Caco-2 (cell line): ENCODE measurements at regions of chr2 and their contacts with region 1.

Region 1: DNA sequence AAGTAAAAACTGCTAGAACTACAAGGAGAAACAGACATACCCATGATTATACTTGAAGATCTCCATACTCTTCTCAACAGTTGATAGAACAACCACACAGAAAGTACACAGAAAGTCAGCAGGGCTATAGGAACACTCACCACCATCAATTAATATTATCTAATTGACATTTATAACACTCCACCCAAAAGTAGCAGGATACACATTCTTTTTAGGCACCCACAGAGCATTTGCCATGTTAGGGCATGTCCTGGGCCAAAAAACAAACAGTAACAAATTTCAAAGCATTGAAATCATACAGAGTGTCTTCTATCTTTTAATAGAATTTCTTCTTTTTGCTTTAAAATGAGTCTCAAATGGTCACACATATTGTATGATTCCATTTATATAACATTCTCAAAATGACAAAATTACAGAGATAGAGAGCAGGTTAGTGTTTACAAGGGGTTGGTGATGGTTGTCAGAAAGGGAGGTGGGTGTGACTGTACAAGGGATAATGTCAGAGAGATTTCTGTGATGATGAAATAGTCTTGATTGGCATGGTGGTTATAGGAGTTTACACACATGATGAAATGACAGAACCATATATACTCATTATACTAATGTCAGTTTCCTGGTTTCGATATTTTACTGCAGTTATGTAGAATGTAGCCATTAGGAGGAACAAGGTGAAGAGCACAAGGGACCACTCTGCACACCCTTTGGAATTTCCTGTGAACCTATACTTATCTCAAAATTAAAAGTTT is 82.8 kb downstream of the NCK2 start:
- DNase-seq: no peak
- H3K4me3 ChIP-seq: no peak overlapping the region
- H3K4me3 Mint-ChIP-seq: no peak overlapping the region
- H3K27ac Mint-ChIP-seq: no peak overlapping the region
- H3K4me1 ChIP-seq: peaks cover 10% of the 10 kb centered on the region
- H3K4me1 Mint-ChIP-seq: peaks cover 18% of the 10 kb centered on the region
- H3K27me3 ChIP-seq: no peaks in the 10 kb centered on the region
- H3K27me3 Mint-ChIP-seq: no peaks in the 10 kb centered on the region
- CTCF ChIP-seq: no peak

Region 2: DNA sequence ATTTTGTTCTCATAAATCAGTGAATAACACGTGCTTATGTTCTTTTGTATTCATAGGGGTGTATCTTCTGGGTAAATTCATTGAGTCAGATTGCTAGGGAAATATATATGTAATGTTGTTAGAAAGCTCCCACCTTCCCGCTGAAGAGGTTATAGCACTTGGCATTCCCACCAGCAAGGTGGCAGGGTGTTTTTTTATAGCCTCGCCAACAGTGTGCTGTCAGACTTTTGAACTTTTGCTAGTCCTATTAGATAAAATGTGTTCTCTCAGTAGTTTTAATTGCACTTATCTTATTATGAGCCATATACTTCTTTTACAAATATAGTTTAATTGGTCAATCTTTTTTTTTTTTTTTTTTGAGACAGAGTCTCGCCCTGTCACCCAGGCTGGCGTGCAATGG is 758.6 kb before region 1 on chr2:
- CTCF ChIA-PET with region 1: no interaction called
- POLR2A ChIA-PET with region 1: no interaction called
- intact Hi-C with region 1: loop called (anchors 5 kb)
- DNase-seq: no peak
- H3K4me3 ChIP-seq: no peak overlapping the region
- H3K4me3 Mint-ChIP-seq: no peak overlapping the region
- H3K27ac Mint-ChIP-seq: no peak overlapping the region
- H3K4me1 ChIP-seq: no peaks in the 10 kb centered on the region
- H3K4me1 Mint-ChIP-seq: no peaks in the 10 kb centered on the region
- H3K27me3 ChIP-seq: no peaks in the 10 kb centered on the region
- H3K27me3 Mint-ChIP-seq: no peaks in the 10 kb centered on the region
- CTCF ChIP-seq: no peak

Region 3: DNA sequence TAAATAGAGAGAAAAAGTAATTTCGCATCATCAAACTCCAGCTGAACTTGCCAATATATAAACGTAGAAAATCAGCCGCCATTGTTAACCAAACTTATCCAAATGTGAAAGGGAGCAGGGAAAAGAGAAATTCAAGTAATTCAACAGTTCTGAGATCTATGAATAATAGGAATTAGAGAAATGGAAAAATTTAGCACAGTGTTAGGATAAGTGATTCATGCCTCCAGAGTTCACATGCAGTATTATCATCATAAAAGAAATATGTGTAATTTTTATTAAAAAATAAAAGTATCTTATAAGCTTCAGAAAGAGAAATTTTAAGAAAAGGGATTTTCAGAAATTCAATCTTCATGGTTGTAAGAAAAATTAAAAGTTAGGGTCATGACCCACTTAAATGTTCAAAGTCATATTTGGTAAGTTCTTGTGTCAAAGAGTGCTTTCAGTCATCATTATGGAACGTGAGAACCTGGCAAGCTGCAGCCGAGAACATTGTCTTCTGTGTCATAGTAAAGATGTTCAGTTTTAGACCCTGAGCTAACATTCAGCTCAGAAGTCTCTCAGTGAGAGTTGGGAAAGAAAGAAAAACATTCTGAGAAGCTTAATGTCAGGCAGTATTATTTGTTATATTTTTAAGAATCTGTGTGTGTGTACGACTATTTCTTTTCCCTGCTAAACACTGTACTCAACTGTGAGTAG is 1584.8 kb after region 1 on chr2:
- CTCF ChIA-PET with region 1: no interaction called
- POLR2A ChIA-PET with region 1: no interaction called
- intact Hi-C with region 1: no loop called
- DNase-seq: no peak
- H3K4me3 ChIP-seq: no peak overlapping the region
- H3K4me3 Mint-ChIP-seq: no peak overlapping the region
- H3K27ac Mint-ChIP-seq: no peak overlapping the region
- H3K4me1 ChIP-seq: no peaks in the 10 kb centered on the region
- H3K4me1 Mint-ChIP-seq: no peaks in the 10 kb centered on the region
- H3K27me3 ChIP-seq: no peaks in the 10 kb centered on the region; the same call in 1 of the 2 replicates
- H3K27me3 Mint-ChIP-seq: peaks cover 11% of the 10 kb centered on the region
- CTCF ChIP-seq: no peak